Gastrocnemius medialis (tissue), 4 donors: ENCODE measurements at regions of chr22 and their contacts with region 1.

Region 1: DNA sequence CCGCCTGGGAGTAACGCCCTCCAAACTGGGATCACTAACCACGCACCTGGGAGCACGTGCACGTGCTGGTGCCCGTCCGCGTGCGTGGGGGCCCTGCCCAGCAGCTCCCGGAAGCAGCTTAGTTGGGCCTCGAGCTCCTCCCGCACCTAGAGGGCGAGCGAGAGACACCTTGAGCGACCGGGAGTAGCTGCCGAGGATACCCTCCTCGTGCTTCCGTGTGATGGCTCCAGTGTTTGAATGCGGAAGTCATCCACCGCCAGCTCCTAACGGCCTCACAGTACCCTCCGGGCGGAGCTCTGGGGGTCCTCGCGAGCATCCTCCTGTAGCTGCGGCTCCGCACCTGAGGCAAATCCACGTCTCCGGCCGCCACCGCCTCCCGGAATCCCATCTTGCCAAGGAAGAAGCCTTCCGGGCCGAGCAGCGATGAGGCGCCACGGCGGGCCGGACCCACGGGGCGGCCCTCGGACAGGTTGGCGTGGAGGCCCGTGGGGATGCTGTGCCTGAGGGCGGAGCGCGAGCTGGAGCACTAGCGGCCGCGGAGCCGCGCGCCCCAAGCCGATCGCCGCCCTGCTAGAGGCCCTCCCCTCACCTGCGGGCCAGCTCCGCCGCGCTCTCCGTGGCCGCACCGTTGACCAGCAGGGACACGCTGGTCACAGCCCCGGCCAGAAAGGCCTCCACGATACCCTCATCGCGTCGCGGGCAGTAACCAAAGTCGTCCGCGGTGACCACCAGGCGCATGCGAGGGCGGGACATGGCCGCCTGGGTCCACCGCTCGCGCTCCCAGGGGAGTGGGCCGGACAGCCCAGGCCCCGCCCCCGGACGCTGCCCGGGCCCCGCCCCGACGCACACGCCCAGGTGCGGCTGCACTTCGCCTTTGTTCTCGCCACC is at the start of gene YDJC:
- DNase-seq: peak; percentile 84 to 85
- ATAC-seq: peak; percentile 95 to 96
- H3K4me3 ChIP-seq: peak within 1 kb of the TSS; percentile 71 to 86 (median 78)
- H3K27ac ChIP-seq: peak within 1 kb of the TSS; percentile 53 to 76 (median 68)
- H3K4me1 ChIP-seq: peaks cover 6 to 19% of the 10 kb centered on the region in 2 donors
- H3K27me3 ChIP-seq: no peaks in the 10 kb centered on the region
- CTCF ChIP-seq: peak in 1 of 5 experiments; percentile 98
- POLR2A ChIP-seq: peak in 1 of 2 donors; percentile 52
- total RNA-seq, gene YDJC: 5.2 to 10.8 (median 6.3) TPM

Region 2: GRCh38 chr22:21444701-21445436 is 184.6 kb before region 1 on chr22:
- in situ Hi-C with region 1: no loop called
- intact Hi-C with region 1: no loop called
- DNase-seq: peak in 1 of 2 donors; percentile 6
- ATAC-seq: no peak
- H3K4me3 ChIP-seq: no peak overlapping the region
- H3K27ac ChIP-seq: no peak overlapping the region
- H3K4me1 ChIP-seq: peaks cover 0 to 5% of the 10 kb centered on the region in 2 donors
- H3K27me3 ChIP-seq: no peaks in the 10 kb centered on the region
- CTCF ChIP-seq: no peak
- POLR2A ChIP-seq: no peak

Region 3: GRCh38 chr22:21567456-21568346 is 61.8 kb before region 1 on chr22 and contains the start of gene UBE2L3:
- in situ Hi-C with region 1: no loop called
- intact Hi-C with region 1: loop called (anchors 1 kb)
- DNase-seq: peak; percentile 70 to 78
- ATAC-seq: peak; percentile 87 to 90
- H3K4me3 ChIP-seq: peak within 1 kb of the TSS; percentile 70 to 98 (median 76)
- H3K27ac ChIP-seq: peak within 1 kb of the TSS; percentile 82 to 97 (median 88)
- H3K4me1 ChIP-seq: peaks cover 33 to 41% of the 10 kb centered on the region in 2 donors
- H3K27me3 ChIP-seq: no peaks in the 10 kb centered on the region
- CTCF ChIP-seq: peak in 1 of 5 experiments; percentile 16
- POLR2A ChIP-seq: peak; percentile 55 to 58
- total RNA-seq, gene UBE2L3: 61.5 to 88.7 (median 70.5) TPM

Region 4: GRCh38 chr22:21641789-21642583 is 12.5 kb after region 1 on chr22 and contains the start of gene SDF2L1:
- in situ Hi-C with region 1: no loop called
- intact Hi-C with region 1: loop called (anchors 1 kb)
- DNase-seq: peak; percentile 98 to 99
- ATAC-seq: peak; percentile 97 to 98
- H3K4me3 ChIP-seq: peak within 1 kb of the TSS; percentile 73 to 97 (median 83)
- H3K27ac ChIP-seq: peak within 1 kb of the TSS; percentile 72 to 80 (median 74)
- H3K4me1 ChIP-seq: peaks cover 0 to 7% of the 10 kb centered on the region in 2 donors
- H3K27me3 ChIP-seq: no peaks in the 10 kb centered on the region
- CTCF ChIP-seq: peak in 1 of 5 experiments; percentile 41
- POLR2A ChIP-seq: peak; percentile 76 to 81
- total RNA-seq, gene SDF2L1: 8.5 to 33.2 (median 23.3) TPM

Region 5: DNA sequence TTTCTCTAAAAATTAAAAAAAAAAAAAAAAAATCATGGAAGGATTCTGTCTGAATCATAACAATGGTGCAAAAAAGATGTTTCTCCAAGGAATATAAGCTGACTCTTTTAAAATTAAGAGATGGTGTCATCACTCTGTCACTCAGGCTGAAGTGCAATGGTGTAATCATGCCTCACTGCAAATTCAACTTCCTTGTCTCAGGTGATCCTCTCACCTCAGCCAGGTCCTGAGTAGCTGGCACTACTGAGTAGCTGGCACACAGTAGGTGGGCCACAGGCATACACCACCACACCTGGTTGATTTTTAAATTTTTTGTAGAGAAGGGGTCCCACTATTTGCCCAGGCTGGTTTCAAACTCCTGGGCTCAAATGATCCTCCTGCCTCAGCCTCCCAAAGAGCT is 160.9 kb after region 1 on chr22:
- in situ Hi-C with region 1: no loop called
- intact Hi-C with region 1: no loop called
- DNase-seq: no peak
- ATAC-seq: no peak
- H3K4me3 ChIP-seq: no peak overlapping the region
- H3K27ac ChIP-seq: no peak overlapping the region
- H3K4me1 ChIP-seq: peaks cover 11 to 15% of the 10 kb centered on the region in 2 donors
- H3K27me3 ChIP-seq: no peaks in the 10 kb centered on the region
- CTCF ChIP-seq: no peak
- POLR2A ChIP-seq: no peak

Region 6: GRCh38 chr22:22431271-22432220 is 802.0 kb after region 1 on chr22:
- in situ Hi-C with region 1: no loop called
- intact Hi-C with region 1: no loop called
- DNase-seq: peak in 1 of 2 donors; percentile 14
- ATAC-seq: peak; percentile 39 to 44
- H3K4me3 ChIP-seq: no peak overlapping the region
- H3K27ac ChIP-seq: no peak overlapping the region
- H3K4me1 ChIP-seq: no peaks in the 10 kb centered on the region
- H3K27me3 ChIP-seq: peaks cover 0 to 29% (median 10%) of the 10 kb centered on the region in 3 donors
- CTCF ChIP-seq: peak in 4 of 5 experiments; percentile 17 to 55 (median 36)
- POLR2A ChIP-seq: no peak